ENCODE measurements at regions of chr1 and their contacts with region 1.

Region 1: GRCh38 chr1:24987875-24988557 is 57.9 kb upstream of the RUNX3 start:
- DNase-seq: no peak
- H3K4me3 Mint-ChIP-seq: no peak overlapping the region
- H3K27ac Mint-ChIP-seq: peak overlapping the region; percentile 55
- H3K4me1 Mint-ChIP-seq: peaks cover 96% of the 10 kb centered on the region
- H3K27me3 Mint-ChIP-seq: no peaks in the 10 kb centered on the region

Region 2: DNA sequence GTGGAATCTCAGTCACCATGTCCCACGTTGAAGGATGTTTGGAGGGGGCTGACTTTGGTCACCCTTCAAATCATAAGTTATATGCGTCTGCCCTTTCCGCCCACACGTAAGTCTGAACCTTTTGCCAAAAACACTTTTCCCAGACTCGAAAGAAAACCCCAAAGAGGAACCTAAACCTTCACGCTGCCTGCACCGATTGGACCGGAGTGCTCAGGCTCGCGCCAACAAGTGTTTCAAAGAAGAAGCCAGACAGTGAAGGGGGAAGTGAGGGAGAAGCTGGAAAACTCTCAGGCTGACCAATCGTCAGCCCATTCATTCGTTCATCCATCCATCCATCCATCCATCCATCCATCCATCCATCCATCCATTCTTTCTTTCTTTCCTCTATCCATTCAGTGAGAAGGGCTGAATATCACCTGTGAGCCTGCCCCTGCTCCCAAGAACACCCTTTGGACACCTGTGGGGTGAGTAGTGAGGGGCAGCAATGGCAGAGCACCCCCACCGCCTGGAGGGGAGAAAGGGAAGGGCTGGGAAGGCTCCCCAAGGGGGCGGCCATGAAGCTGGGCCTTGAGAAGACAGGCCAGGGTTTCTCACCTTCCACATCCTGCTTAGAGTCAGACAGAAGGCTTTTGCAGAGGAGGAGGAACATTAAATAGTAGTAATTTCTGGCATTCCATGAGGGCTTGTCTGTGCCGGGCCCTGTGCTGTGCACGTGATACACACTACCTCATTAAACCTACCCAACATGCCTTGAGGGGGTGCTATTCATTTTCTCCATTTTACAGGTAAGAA is 30.8 kb before region 1 on chr1:
- CTCF ChIA-PET with region 1: no interaction called
- POLR2A ChIA-PET with region 1: no interaction called
- DNase-seq: no peak
- H3K4me3 Mint-ChIP-seq: peak overlapping the region; percentile 48
- H3K27ac Mint-ChIP-seq: peak overlapping the region; percentile 68
- H3K4me1 Mint-ChIP-seq: peaks cover 97% of the 10 kb centered on the region
- H3K27me3 Mint-ChIP-seq: no peaks in the 10 kb centered on the region

Region 3: GRCh38 chr1:24970399-24970753 is 17.6 kb before region 1 on chr1:
- CTCF ChIA-PET with region 1: interaction called, 22 read pairs
- POLR2A ChIA-PET with region 1: interaction called, 4 read pairs
- DNase-seq: no peak
- H3K4me3 Mint-ChIP-seq: no peak overlapping the region
- H3K27ac Mint-ChIP-seq: no peak overlapping the region
- H3K4me1 Mint-ChIP-seq: peaks cover 76% of the 10 kb centered on the region
- H3K27me3 Mint-ChIP-seq: no peaks in the 10 kb centered on the region

Measured in activated CD4-positive, alpha-beta T cell treated with anti-CD3 and anti-CD28 coated beads, Interleukin-2, amount 10 ng/mL, durations not matched to agents 7 days and 5 days (primary cell).